ENCODE measurements at regions of chr10 and their contacts with region 1.

Region 1: GRCh38 chr10:96765406-96766240 is 45.3 kb upstream of the PIK3AP1 start:
- DNase-seq: peak; percentile 38 to 83 (median 57)
- ATAC-seq: peak; percentile 37 to 81 (median 72)
- H3K4me3 ChIP-seq: no peak overlapping the region
- H3K27ac ChIP-seq: no peak overlapping the region
- H3K4me1 ChIP-seq: no peaks in the 10 kb centered on the region
- H3K27me3 ChIP-seq: no peaks in the 10 kb centered on the region
- CTCF ChIP-seq: peak; percentile 58 to 81 (median 74)
- POLR2A ChIP-seq: no peak

Region 2: DNA sequence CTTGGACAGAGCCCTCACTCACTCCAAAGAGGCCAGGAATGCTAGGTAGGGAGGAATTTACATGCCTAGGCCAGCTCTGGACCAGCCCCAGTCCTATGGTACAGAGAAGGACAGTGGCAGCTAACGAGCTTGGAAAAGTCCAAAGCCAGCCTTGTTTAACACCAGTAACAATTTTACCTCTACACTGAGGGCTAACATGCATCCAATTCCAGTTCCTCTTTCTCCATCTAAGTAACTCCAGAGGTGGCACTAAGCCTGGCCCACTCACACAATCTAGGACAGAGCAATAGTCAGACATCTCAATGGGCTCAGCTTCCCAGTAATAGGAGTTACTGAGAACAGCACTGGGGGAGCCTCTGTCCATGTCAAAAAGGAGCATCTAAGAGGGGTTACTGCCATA is 60.8 kb after region 1 on chr10:
- intact Hi-C with region 1: loop called in 3 of 10 experiments (anchors 2 to 10 kb)
- DNase-seq: no peak
- ATAC-seq: peak in 1 of 4 donors; percentile 11
- H3K4me3 ChIP-seq: no peak overlapping the region
- H3K27ac ChIP-seq: no peak overlapping the region
- H3K4me1 ChIP-seq: peaks cover 0 to 14% (median 6%) of the 10 kb centered on the region in 12 donors
- H3K27me3 ChIP-seq: no peaks in the 10 kb centered on the region
- CTCF ChIP-seq: no peak
- POLR2A ChIP-seq: no peak

Region 3: DNA sequence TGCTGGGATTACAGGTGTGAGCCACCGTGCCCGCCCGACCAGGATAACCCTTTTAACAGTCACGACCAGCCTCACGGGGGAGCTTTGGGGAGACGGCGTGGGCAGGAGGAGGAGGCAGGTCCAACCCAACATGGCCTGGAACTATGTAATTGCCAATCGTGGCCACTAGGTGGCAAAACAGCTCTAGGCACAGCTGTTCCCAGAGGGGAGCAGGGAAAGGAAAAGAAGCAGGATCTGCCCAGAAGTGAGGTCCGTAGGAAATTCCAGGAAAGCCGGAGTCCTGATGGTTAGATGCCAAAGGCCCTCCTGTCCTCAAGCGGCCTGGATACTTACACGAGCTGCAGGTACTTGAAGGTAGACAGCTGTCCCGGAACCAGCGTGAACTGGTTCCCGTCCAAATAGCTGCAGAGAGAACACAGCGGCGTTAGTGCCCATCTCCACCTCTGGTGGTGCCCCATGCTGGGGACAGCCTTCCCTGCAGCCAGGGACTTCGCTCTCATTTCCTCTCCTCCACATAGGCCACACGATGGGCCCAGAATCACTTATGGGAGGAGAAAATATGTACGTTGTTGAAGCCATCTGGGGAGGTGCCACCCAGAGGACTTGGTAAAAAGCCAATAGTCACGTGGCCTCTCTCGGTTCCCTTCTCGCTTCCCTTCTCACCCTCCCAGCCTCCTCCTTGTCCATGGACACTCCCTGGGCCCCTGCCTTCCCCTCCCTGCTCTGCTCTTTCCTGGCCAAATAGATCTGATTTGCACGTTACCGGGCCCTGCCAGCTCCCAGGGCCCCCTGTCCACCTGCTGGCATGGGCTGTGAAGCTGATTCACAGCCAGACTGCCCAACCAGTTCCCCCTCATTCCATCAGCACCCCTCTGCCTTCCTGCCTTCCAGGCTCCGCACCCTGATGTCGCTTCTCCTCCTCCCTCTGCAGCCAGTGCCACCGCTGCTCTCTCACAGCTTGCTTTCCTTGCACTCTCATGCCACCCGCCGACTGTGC is 272.0 kb after region 1 on chr10:
- intact Hi-C with region 1: loop called in 1 of 10 experiments (anchors 10 kb)
- DNase-seq: peak; percentile 69 to 81 (median 78)
- ATAC-seq: peak; percentile 89 to 95 (median 90)
- H3K4me3 ChIP-seq: peak overlapping the region in 11 of 12 donors; percentile 29 to 61 (median 46)
- H3K27ac ChIP-seq: peak overlapping the region in 3 of 12 donors; percentile 5 to 30 (median 6)
- H3K4me1 ChIP-seq: peaks cover 0 to 12% (median 10%) of the 10 kb centered on the region in 12 donors
- H3K27me3 ChIP-seq: no peaks in the 10 kb centered on the region
- CTCF ChIP-seq: peak; percentile 72 to 92 (median 86)
- POLR2A ChIP-seq: no peak

Region 4: DNA sequence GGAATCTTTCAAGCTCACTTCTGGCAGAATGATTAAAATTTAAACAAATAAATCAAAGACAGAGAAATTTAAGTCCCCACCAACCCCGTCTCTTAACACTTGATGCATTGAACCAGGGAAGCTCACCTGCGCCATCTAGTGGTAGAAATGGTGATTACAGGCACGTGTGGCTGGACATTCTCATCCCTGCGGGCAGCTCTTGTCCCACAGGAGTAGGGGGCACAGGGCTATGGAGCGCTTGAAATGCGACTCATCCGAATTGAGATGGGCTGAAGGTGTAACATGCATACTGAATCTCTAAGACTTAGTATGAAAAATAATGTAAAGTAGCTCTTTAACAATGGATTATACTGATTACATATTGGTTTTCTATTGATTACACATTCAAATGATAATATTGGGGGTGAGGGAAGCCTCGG is 444.9 kb after region 1 on chr10:
- intact Hi-C with region 1: loop called in 1 of 10 experiments (anchors 10 kb)
- DNase-seq: peak in 4 of 5 donors; percentile 45 to 63 (median 53)
- ATAC-seq: peak; percentile 49 to 73 (median 60)
- H3K4me3 ChIP-seq: no peak overlapping the region
- H3K27ac ChIP-seq: no peak overlapping the region
- H3K4me1 ChIP-seq: no peaks in the 10 kb centered on the region
- H3K27me3 ChIP-seq: no peaks in the 10 kb centered on the region
- CTCF ChIP-seq: peak in 11 of 12 donors; percentile 88 to 100 (median 97)
- POLR2A ChIP-seq: no peak

Measured in heart left ventricle (tissue), 16 donors.